Calu3 (cell line): ENCODE measurements at regions of chr17 and their contacts with region 1.

Region 1: DNA sequence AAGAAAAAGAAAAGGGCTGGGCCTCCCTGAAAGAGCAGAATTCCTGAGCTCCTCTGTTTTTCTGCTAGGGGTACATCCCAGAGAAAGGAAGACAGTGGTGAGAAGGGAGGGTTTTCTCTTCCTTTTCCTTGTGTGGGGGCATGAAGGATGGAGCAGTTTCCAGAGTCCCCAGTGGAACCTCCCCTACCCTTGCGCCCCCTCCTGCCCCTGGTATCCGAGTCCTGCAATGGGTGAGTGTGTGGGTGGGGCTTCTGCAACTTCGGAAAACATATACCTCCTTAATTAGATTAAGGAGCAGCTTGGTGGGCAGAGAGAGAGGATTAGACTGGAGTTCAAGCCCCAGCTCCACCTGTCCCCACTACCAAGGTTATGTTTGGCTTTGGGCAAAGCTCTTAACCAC is 5.4 kb upstream of the GIP start:
- DNase-seq: no peak
- H3K4me3 Mint-ChIP-seq: no peak overlapping the region
- H3K27ac Mint-ChIP-seq: no peak overlapping the region
- H3K4me1 Mint-ChIP-seq: peaks cover 37% of the 10 kb centered on the region
- H3K27me3 Mint-ChIP-seq: peaks cover 6% of the 10 kb centered on the region
- CTCF ChIP-seq: no peak

Region 2: DNA sequence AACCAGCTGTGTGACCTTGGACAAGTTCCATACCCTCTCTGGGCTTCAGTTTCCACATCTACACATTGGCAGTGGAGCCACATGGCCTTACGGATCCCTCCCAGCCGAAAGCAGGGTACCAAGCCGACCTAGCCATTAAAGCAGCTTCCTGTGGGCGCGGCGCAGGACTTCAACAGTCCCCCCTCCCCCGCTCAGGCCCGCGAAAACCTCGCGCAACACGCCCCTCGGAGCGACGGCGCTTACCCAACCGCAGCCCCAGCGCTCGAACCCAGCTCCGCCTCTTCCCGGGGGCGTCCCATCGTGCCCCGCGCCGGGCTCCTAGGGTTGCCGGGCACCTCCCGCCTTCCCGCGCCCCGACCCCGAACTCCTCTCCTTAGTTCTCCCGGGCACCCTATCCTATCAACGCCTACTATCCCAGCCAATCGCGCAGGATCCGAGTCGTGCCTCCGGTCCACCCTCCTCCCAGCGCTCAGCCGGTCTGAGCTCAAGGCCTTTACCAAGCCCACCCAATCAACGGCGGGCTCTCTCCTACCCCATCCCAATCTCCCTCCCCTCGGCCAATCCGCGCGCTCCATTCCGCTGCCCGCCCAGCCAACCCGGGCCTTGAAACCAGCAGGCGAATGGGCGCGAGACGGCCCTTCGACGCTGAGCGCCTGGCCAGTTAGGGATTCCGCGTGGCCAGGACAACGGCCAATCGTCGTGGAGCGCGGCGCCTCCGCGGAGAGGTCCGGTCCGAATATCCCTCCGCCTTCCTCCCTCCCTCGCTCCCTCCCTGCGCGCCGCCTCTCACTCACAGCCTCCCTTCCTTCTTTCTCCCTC is 1324.4 kb before region 1 on chr17 and contains the start of gene KPNB1:
- CTCF ChIA-PET with region 1: interaction called, 13 read pairs
- intact Hi-C with region 1: no loop called
- DNase-seq: peak; percentile 100
- H3K4me3 Mint-ChIP-seq: peak within 1 kb of the TSS; percentile 91
- H3K27ac Mint-ChIP-seq: peak within 1 kb of the TSS; percentile 95
- H3K4me1 Mint-ChIP-seq: peaks cover 37% of the 10 kb centered on the region
- H3K27me3 Mint-ChIP-seq: no peaks in the 10 kb centered on the region
- CTCF ChIP-seq: no peak
- total RNA-seq, gene KPNB1: 511 and 538 TPM in 2 replicates

Region 3: DNA sequence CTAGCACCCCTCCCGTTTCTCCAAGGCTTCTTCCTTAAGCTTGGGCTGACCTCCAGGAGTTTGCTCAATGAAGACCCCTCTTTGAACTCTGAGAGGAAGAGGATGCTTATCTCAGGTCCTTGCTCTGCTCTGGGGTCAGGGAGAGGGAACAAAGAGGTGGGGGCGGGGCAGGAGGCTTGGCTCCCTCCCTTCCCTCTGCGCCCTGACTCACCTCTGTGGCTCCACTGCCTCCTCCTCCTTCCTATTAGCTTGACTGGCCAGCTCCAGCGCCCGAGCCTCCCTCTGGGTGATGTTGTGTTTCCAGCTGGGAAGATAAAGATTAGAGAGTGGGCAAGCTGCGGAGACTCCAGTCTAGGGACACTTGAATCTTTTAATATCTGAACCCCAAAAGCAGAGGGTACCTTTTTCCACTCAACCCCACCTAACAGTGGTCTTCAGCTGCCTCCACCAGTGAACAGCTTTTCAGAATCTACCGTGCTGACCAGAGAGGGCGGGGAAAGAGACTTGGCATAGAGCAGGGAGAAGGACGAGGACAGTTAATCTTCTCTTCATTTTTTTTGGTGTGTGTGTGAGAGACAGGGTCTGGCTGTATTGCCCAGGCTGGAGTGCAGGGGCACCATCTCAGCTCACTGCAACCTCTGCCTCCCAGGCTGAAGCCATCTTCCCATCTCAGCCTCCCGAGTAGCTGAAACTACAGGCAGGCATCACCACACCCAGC is 12.1 kb before region 1 on chr17:
- CTCF ChIA-PET with region 1: interaction called, 20 read pairs
- intact Hi-C with region 1: no loop called
- DNase-seq: peak; percentile 71
- H3K4me3 Mint-ChIP-seq: peak overlapping the region; percentile 10
- H3K27ac Mint-ChIP-seq: no peak overlapping the region
- H3K4me1 Mint-ChIP-seq: peaks cover 20% of the 10 kb centered on the region
- H3K27me3 Mint-ChIP-seq: peaks cover 48% of the 10 kb centered on the region
- CTCF ChIP-seq: no peak